Panc1 (cell line): ENCODE measurements at regions of chr5 and their contacts with region 1.

Region 1: GRCh38 chr5:178381921-178382695 is 149.5 kb upstream of the PHYKPL start:
- DNase-seq: no peak
- ATAC-seq: no peak
- H3K4me3 ChIP-seq: no peak overlapping the region
- H3K27ac ChIP-seq: no peak overlapping the region
- H3K4me1 ChIP-seq: no peaks in the 10 kb centered on the region
- H3K27me3 ChIP-seq: no peaks in the 10 kb centered on the region
- CTCF ChIP-seq: no peak

Region 2: GRCh38 chr5:177997307-177997670 is 384.8 kb before region 1 on chr5:
- CTCF ChIA-PET with region 1: no interaction called
- POLR2A ChIA-PET with region 1: interaction called, 14 read pairs
- in situ Hi-C with region 1: no loop called
- intact Hi-C with region 1: no loop called
- DNase-seq: no peak
- ATAC-seq: no peak
- H3K4me3 ChIP-seq: no peak overlapping the region
- H3K27ac ChIP-seq: no peak overlapping the region
- H3K4me1 ChIP-seq: no peaks in the 10 kb centered on the region
- H3K27me3 ChIP-seq: peaks cover 2% of the 10 kb centered on the region; the same call in 1 of the 2 replicates
- CTCF ChIP-seq: no peak

Region 3: DNA sequence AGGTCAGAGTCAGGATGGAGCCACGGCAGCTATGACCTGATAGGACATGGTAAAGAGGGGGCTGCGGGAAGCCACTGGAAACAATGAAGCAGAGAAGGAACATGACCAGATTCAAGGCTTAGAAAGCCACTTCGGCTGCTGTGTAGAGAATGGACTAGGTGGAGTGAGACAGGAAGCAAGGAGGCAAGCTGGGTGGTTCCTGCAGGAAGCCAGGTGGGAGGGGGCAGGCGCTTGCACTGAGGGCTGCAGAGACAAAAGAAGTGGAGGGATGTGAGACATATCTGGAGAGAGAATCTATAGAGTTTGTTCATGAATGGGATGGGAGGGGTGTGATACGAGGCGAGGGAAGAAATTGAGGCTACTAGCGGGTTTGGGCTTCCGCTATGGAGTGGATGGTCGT is 287.8 kb before region 1 on chr5:
- CTCF ChIA-PET with region 1: no interaction called
- POLR2A ChIA-PET with region 1: no interaction called
- in situ Hi-C with region 1: no loop called
- intact Hi-C with region 1: no loop called
- DNase-seq: no peak
- ATAC-seq: no peak
- H3K4me3 ChIP-seq: no peak overlapping the region
- H3K27ac ChIP-seq: no peak overlapping the region
- H3K4me1 ChIP-seq: no peaks in the 10 kb centered on the region
- H3K27me3 ChIP-seq: no peaks in the 10 kb centered on the region
- CTCF ChIP-seq: no peak